Left cardiac atrium (tissue), 4 donors: ENCODE measurements at regions of chr12 and their contacts with region 1.

Region 1: DNA sequence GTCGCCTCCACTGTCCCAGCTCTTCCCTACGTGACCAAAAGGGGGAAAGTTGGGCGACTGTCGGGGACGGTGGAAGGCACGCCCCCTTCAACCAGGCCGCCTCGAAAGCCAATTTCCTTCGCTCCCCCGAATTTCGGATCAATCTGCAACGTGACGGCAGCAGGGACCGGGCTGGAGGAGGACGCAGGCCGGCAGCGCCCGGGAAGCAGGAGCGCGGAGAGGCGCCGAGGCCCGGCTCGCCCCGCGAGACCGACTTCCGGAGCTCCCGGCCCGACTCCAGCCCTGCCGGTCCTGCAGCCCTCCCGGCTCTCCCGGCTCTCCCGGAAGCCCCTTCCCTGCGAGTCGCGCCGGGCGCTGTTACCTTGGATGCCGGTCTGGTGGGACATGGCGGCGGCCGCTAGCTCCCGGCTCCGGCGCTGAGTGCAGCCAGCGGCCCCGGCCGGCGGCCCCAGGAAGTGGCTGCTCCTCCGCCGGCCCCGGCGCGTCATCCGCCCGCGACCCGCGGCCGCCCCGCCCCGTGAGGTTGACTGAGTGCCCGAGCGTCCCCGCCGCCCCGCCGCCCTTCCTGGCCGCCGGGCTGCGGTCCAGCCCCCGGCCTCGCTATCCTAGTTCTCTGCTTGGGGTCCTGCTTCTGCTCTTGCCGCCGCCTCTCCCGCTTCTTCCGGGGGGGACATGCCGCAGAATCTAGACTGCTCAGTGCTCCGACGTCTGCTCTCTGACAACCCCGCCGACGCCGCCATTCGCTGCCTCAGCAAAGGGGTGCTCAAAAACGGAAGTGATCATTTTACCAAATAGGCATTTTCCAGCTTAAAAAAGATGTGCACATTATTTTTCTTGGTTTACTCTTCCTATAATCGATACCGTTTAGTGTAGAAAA is at the start of gene TWF1:
- DNase-seq: peak; percentile 92
- ATAC-seq: peak; percentile 99 to 100
- total RNA-seq, gene TWF1: 26.7 to 32.4 TPM

Region 2: GRCh38 chr12:43758728-43759563 is 47.2 kb before region 1 on chr12 and contains the starts of genes IRAK4 and PUS7L:
- intact Hi-C with region 1: loop called in 1 of 2 experiments (anchors 5 kb)
- DNase-seq: peak; percentile 98
- ATAC-seq: peak; percentile 99 to 100
- total RNA-seq, gene IRAK4: 9.7 to 10.7 TPM
- total RNA-seq, gene PUS7L: 6.8 to 9.1 TPM

Region 3: GRCh38 chr12:43835656-43836474 is 29.8 kb after region 1 on chr12 and contains the start of gene TMEM117:
- intact Hi-C with region 1: loop called in 1 of 2 experiments (anchors 2 kb)
- DNase-seq: peak; percentile 88
- ATAC-seq: peak; percentile 94
- total RNA-seq, gene TMEM117: 7.3 to 9.8 TPM

Region 4: DNA sequence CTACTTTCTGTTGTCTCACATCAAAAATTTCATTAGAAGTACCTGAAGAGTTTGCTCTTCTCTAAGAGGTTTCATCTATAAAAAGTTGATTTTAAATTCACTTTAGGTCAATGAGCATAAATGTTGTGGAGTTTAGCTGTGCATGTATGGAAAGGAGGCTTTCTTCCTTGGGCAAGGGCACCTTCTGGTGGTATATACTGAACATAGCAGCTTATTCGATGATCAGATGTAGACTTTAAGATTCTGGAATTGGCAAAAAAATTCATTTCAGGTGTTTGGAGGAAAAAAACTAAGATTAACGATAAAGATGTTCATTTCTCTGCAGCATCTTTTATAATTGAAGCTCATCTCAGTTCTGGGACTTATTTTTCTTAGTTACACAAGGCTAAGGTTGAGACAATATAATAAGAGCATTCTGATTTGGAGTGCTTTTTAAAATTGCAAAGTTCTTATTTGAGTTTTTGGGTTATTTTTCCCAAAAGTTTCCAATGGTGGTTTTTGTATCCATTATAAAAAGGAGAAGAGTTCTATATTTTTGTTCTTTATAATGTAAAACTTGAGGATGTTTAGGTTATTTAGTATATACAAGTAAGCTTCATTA is 76.6 kb after region 1 on chr12:
- intact Hi-C with region 1: loop called in 1 of 2 experiments (anchors 5 kb)
- DNase-seq: no peak
- ATAC-seq: peak; percentile 66 to 79

Region 5: GRCh38 chr12:43893670-43894069 is 87.6 kb after region 1 on chr12:
- intact Hi-C with region 1: no loop called
- DNase-seq: no peak
- ATAC-seq: no peak

Region 6: GRCh38 chr12:44101475-44101874 is 295.4 kb after region 1 on chr12:
- intact Hi-C with region 1: no loop called
- DNase-seq: no peak
- ATAC-seq: no peak

Region 7: DNA sequence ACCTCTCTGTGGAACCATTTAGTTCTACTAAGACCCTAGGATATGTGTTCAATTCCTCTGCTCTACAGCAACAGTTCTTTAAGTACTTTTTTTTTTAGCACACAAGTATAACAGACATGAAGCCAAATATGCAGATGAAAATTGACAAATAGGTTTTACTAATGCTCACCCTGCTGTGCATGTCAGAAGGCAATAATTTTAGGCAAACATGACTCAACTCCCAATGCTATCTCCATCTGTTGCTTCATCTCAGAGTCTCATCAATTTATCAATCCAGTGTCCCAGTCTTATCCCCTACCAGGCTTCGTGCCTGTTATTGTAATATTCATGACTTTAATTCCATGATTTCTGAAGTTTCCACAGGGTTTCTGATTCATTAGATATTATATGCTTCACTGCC is 1187.1 kb after region 1 on chr12:
- intact Hi-C with region 1: no loop called
- DNase-seq: no peak
- ATAC-seq: no peak